Right cardiac atrium (tissue), 5 donors: ENCODE measurements at regions of chr10 and their contacts with region 1.

Region 1: DNA sequence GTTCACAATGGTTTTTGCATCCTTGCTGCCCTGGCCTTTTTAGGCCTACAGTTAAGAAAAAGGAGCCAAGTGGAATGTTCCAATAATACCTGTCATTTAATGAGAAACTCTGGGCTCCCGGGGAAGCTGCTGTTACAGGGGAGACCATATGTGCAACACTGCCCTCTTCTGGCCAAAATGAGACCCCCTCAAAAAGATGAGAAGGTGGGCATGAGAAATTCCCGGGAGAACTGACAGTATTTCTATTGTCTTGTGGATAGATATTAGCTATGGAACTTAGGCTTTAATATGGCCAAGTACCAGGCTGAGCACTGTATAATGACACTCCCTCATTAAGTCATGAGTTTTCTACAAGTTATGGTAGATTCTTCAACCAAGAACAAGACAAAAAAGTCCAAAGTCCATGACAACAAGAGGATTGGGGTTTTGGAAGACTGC is 99.4 kb downstream of the CCDC3 start:
- DNase-seq: peak in 2 of 3 donors; percentile 51 to 68
- ATAC-seq: peak; percentile 46 to 52
- H3K4me3 ChIP-seq: no peak overlapping the region
- H3K27ac ChIP-seq: no peak overlapping the region
- H3K4me1 ChIP-seq: no peaks in the 10 kb centered on the region
- H3K27me3 ChIP-seq: no peaks in the 10 kb centered on the region

Region 2: DNA sequence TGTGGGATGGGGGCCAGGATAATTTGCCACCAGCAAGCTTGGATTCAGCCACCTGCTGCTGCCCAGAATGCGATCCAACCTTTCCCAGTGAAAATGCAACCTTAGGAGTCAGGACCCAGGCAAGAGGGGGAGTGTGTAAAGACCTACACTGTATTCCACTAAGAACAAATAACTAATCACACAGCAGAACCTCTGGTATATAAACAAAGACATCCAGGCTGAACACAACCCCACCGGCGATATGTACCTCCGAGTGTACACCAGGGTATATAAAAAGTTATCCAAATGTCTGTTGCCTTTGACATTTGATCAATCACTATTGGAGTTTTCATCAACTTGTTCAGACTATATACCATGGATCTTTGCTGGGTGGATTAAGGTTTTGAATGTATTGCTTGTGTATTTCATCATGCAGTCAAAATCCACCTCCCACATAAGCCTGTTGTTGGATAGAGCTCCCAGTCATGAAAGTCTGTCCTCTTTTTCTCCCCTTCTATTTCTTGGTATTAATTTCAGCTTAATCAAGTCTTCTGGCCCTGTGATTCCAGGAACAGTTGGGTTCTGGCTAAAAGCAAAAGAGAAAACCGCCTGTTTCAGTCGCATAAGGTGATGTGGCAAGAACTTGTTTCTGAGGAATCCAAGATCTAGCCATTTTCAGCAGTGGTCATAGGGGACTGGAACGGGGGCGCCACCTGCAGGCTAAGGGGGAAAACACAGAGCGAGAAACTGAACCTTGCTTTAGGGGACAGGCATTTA is 191.4 kb before region 1 on chr10:
- intact Hi-C with region 1: loop called in 3 of 4 experiments (anchors 5 to 10 kb)
- DNase-seq: peak; percentile 71 to 89 (median 85)
- ATAC-seq: peak; percentile 68 to 73
- H3K4me3 ChIP-seq: no peak overlapping the region
- H3K27ac ChIP-seq: no peak overlapping the region
- H3K4me1 ChIP-seq: peaks cover 7% of the 10 kb centered on the region
- H3K27me3 ChIP-seq: no peaks in the 10 kb centered on the region

Region 3: GRCh38 chr10:12717981-12718707 is 184.0 kb before region 1 on chr10:
- intact Hi-C with region 1: loop called in 3 of 4 experiments (anchors 5 to 10 kb)
- DNase-seq: no peak
- ATAC-seq: no peak
- H3K4me3 ChIP-seq: no peak overlapping the region
- H3K27ac ChIP-seq: no peak overlapping the region
- H3K4me1 ChIP-seq: peaks cover 13% of the 10 kb centered on the region
- H3K27me3 ChIP-seq: no peaks in the 10 kb centered on the region

Region 4: GRCh38 chr10:12795315-12796110 is 106.6 kb before region 1 on chr10:
- intact Hi-C with region 1: loop called in 1 of 4 experiments (anchors 10 kb)
- DNase-seq: peak; percentile 38 to 77 (median 73)
- ATAC-seq: peak; percentile 46 to 70
- H3K4me3 ChIP-seq: no peak overlapping the region
- H3K27ac ChIP-seq: no peak overlapping the region
- H3K4me1 ChIP-seq: peaks cover 5% of the 10 kb centered on the region
- H3K27me3 ChIP-seq: no peaks in the 10 kb centered on the region

Region 5: DNA sequence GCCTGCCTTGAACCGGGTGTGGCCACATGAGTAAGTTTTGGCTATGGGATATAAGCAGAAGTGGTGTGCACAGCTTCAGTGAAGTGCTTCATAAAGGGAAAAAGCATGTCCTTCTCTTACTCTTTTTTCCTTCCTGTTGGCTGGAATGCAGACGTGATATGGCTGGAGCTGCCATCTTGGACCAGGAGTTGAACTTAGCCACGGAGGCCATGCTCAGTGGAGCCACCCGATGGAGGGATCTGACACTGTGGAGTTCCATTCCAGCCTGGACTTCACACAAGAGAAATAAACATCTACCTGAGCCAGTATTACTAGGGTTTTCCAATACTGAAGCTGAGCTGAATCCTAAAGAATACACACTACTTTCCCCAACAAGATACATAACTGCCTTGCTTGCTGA is 47.1 kb after region 1 on chr10:
- intact Hi-C with region 1: no loop called
- DNase-seq: no peak
- ATAC-seq: no peak
- H3K4me3 ChIP-seq: no peak overlapping the region
- H3K27ac ChIP-seq: no peak overlapping the region
- H3K4me1 ChIP-seq: no peaks in the 10 kb centered on the region
- H3K27me3 ChIP-seq: no peaks in the 10 kb centered on the region

Region 6: GRCh38 chr10:13056456-13057077 is 154.4 kb after region 1 on chr10:
- intact Hi-C with region 1: loop called in 1 of 4 experiments (anchors 10 kb)
- DNase-seq: no peak
- ATAC-seq: peak in 1 of 2 donors; percentile 45
- H3K4me3 ChIP-seq: no peak overlapping the region
- H3K27ac ChIP-seq: no peak overlapping the region
- H3K4me1 ChIP-seq: no peaks in the 10 kb centered on the region
- H3K27me3 ChIP-seq: no peaks in the 10 kb centered on the region